Naive thymus-derived CD4-positive, alpha-beta T cell (primary cell): ENCODE measurements at regions of chr6 and their contacts with region 1.

Region 1: DNA sequence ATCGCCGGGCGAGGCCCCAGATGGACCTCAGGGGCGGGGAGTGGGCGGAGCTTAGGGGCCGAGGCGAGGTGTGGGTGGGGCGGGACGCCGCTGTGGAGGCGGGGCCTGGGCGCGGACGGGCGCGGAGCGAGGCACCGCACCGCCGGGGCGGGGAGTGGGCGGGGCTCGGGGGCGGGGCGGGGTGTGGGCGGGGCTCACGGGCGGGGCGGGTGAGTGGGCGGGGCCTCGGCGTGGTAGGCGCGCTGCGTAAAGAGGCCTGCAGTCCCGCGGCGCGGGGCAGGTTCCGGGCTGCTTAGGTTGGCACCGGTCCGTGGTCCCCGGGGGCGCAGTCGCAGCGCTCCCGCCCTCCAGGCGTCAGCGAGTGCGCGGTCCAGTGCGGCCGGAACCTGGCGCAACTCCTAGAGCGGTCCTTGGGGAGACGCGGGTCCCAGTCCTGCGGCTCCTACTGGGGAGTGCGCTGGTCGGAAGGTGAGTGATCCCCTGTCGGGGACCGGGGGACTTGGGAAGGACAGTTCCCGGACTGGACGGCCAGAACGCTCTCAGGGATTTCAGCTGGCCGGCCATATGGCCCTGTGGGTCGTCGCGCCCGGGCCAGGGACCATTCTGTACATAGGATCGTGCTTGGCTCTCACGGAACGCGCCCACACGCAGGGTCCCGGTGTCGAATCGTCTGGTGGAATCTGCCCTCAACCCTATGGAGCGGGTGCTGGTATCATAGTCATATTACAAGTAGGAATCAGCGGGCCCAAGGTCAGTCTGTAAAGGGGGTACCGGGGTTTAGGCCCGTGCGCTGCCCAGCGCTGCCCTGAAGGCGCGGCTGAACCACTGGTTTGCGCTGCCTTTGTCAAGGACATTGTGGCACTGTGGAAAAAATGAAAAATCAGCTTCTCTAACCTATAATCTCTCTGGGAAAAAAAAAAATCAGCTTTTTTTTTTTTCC is at the start of gene NQO2:
- DNase-seq: peak; percentile 68 to 92 (median 81)
- ATAC-seq: peak; percentile 91
- H3K4me3 ChIP-seq: peak within 1 kb of the TSS; percentile 95
- H3K4me3 Mint-ChIP-seq: peak within 1 kb of the TSS; percentile 83 to 95 (median 90)
- H3K27ac ChIP-seq: peak within 1 kb of the TSS; percentile 88
- H3K27ac Mint-ChIP-seq: peak within 1 kb of the TSS; percentile 78 to 96 (median 88)
- H3K4me1 ChIP-seq: peaks cover 5 to 18% of the 10 kb centered on the region in 2 donors
- H3K4me1 Mint-ChIP-seq: peaks cover 11 to 35% (median 26%) of the 10 kb centered on the region in 7 donors
- H3K27me3 ChIP-seq: no peaks in the 10 kb centered on the region
- H3K27me3 Mint-ChIP-seq: peaks cover 0 to 5% (median 0%) of the 10 kb centered on the region in 5 donors
- total RNA-seq, gene NQO2: 8.1 to 34.6 (median 22.6) TPM

Region 2: GRCh38 chr6:2706558-2706957 is 293.3 kb before region 1 on chr6:
- CTCF ChIA-PET with region 1: no interaction called
- POLR2A ChIA-PET with region 1: no interaction called
- intact Hi-C with region 1: no loop called
- DNase-seq: no peak
- ATAC-seq: no peak
- H3K4me3 ChIP-seq: no peak overlapping the region
- H3K4me3 Mint-ChIP-seq: no peak overlapping the region
- H3K27ac ChIP-seq: no peak overlapping the region
- H3K27ac Mint-ChIP-seq: no peak overlapping the region
- H3K4me1 ChIP-seq: no peaks in the 10 kb centered on the region
- H3K4me1 Mint-ChIP-seq: no peaks in the 10 kb centered on the region
- H3K27me3 ChIP-seq: no peaks in the 10 kb centered on the region
- H3K27me3 Mint-ChIP-seq: peaks cover 0 to 28% (median 12%) of the 10 kb centered on the region in 5 donors

Region 3: GRCh38 chr6:2738373-2738979 is 261.4 kb before region 1 on chr6:
- CTCF ChIA-PET with region 1: no interaction called
- POLR2A ChIA-PET with region 1: no interaction called
- intact Hi-C with region 1: loop called in 1 of 2 experiments (anchors 1 kb)
- DNase-seq: peak in 8 of 9 donors; percentile 27 to 59 (median 50)
- ATAC-seq: peak; percentile 72
- H3K4me3 ChIP-seq: no peak overlapping the region
- H3K4me3 Mint-ChIP-seq: no peak overlapping the region
- H3K27ac ChIP-seq: no peak overlapping the region
- H3K27ac Mint-ChIP-seq: no peak overlapping the region
- H3K4me1 ChIP-seq: no peaks in the 10 kb centered on the region
- H3K4me1 Mint-ChIP-seq: peaks cover 0 to 5% (median 0%) of the 10 kb centered on the region in 7 donors
- H3K27me3 ChIP-seq: no peaks in the 10 kb centered on the region
- H3K27me3 Mint-ChIP-seq: peaks cover 0 to 21% (median 0%) of the 10 kb centered on the region in 5 donors

Region 4: DNA sequence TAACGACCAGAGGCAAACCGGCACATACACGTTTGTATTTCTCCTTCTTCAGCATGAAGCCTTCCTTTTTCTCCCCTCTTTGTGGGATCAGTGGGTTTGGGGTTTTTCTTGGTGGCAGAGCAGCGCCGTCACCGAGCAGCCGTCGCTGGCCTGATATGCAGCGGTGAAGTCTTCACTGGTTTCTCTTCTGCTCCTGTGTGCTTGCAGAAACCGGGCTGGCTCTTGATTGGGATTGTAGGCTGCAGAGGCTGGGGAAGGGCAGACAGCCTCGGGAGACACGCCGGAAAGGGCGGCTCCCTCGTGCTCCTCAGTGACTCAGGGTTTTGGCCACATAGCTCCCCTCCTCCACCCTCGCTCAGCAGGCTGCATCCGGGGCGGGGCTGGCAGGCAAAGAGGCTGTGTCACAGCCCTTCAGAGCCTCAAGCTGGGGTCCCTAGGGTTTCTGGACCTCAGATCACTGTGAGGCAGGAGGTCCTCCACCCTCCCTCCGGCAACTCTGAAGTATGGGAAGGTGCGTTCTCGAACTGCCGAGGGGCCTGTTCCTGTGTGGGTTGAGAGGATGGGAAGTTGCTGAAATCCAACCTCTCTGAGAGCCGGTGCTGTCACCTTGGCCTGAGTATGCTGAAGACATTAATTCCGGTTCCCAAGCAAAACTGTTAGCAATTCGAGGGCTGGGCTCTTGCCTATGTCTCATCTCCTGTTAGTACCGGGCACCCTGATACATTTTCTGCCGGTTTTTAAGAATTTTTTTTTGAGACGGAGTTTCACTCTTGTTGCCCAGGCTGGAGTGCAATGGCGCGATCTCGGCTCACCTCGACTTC is 24.0 kb after region 1 on chr6:
- CTCF ChIA-PET with region 1: interaction called, 6 read pairs
- POLR2A ChIA-PET with region 1: interaction called, 53 read pairs
- intact Hi-C with region 1: loop called (anchors 1 kb)
- DNase-seq: peak; percentile 57 to 89 (median 72)
- ATAC-seq: peak; percentile 90
- H3K4me3 ChIP-seq: peak overlapping the region; percentile 69
- H3K4me3 Mint-ChIP-seq: peak overlapping the region; percentile 80 to 94 (median 88)
- H3K27ac ChIP-seq: peak overlapping the region; percentile 18
- H3K27ac Mint-ChIP-seq: peak overlapping the region in 8 of 9 donors; percentile 58 to 98 (median 82)
- H3K4me1 ChIP-seq: peaks cover 29 to 38% of the 10 kb centered on the region in 2 donors
- H3K4me1 Mint-ChIP-seq: peaks cover 23 to 56% (median 43%) of the 10 kb centered on the region in 7 donors
- H3K27me3 ChIP-seq: no peaks in the 10 kb centered on the region
- H3K27me3 Mint-ChIP-seq: peaks cover 0 to 1% (median 0%) of the 10 kb centered on the region in 5 donors

Region 5: DNA sequence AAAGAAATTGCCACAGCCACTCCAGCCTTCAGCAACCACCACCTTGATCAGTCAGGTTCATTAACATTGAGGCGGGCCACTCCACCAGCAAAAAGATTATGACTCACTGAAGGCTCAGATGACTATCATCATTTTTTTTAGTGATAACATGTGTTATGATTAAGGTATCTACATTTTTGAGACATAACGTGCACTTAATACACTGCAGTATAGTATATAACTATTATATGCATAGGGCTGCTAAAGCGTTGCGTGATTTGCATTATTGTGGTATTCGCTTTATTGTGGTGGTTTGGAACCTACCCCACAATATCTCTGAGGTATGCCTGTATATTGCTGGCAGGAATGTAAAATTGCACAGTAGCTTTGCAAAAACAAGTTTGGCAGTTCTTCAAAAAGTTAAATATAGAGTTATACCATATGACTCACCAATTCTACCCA is 61.6 kb after region 1 on chr6:
- CTCF ChIA-PET with region 1: interaction called, 17 read pairs
- POLR2A ChIA-PET with region 1: interaction called, 7 read pairs
- intact Hi-C with region 1: no loop called
- DNase-seq: no peak
- ATAC-seq: no peak
- H3K4me3 ChIP-seq: no peak overlapping the region
- H3K4me3 Mint-ChIP-seq: peak overlapping the region in 1 of 10 donors; percentile 19
- H3K27ac ChIP-seq: no peak overlapping the region
- H3K27ac Mint-ChIP-seq: no peak overlapping the region
- H3K4me1 ChIP-seq: no peaks in the 10 kb centered on the region
- H3K4me1 Mint-ChIP-seq: peaks cover 18 to 41% (median 34%) of the 10 kb centered on the region in 7 donors
- H3K27me3 ChIP-seq: no peaks in the 10 kb centered on the region
- H3K27me3 Mint-ChIP-seq: peaks cover 0 to 3% (median 0%) of the 10 kb centered on the region in 5 donors

Region 6: DNA sequence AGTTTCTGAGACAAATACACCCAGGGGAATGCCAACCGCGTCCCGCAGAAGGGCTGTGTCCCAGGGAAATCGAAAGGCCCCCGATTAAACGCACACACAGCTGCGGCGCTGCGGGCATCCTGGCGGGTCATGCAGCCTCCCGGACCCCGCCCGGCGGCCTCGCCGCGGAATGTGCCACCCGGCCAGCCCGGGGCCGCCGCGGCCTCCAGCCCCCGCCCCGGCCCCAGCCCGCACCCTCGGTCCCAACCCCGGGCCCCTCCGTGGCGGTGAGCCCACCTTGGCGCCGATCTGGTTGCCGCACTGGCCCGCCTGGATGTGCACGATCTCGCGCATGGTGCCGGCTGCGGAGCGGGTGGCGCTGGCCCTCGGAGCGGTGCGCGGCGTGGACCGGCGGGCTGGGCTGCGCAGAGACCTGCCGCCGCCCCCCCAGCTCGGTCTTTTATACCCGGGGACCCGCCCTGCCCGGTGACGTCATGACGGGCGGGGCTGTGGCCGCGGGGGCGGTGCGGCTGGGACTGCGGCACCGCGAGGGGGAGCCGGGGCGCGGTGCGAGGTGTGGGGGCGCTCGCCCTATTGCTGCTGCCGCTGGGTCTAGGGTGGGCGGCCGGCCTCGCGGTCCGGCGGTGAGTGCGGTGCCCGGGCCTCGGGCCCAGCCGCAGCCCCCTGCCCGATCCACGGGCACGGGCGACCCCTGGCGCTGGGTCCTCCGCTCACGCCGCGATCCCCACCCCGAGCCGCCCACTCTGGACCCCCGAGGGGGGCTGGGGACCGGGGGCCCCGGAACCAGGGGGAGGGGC is 157.4 kb after region 1 on chr6 and contains the start of gene TUBB2A:
- CTCF ChIA-PET with region 1: no interaction called
- POLR2A ChIA-PET with region 1: no interaction called
- intact Hi-C with region 1: loop called in 1 of 2 experiments (anchors 2 kb)
- DNase-seq: peak; percentile 83 to 96 (median 90)
- ATAC-seq: peak; percentile 87
- H3K4me3 ChIP-seq: peak within 1 kb of the TSS; percentile 61
- H3K4me3 Mint-ChIP-seq: peak within 1 kb of the TSS; percentile 81 to 94 (median 92)
- H3K27ac ChIP-seq: peak within 1 kb of the TSS; percentile 86
- H3K27ac Mint-ChIP-seq: peak within 1 kb of the TSS; percentile 75 to 96 (median 93)
- H3K4me1 ChIP-seq: peaks cover 15 to 17% of the 10 kb centered on the region in 2 donors
- H3K4me1 Mint-ChIP-seq: peaks cover 4 to 37% (median 33%) of the 10 kb centered on the region in 7 donors
- H3K27me3 ChIP-seq: no peaks in the 10 kb centered on the region
- H3K27me3 Mint-ChIP-seq: peaks cover 0 to 52% (median 4%) of the 10 kb centered on the region in 5 donors
- total RNA-seq, gene TUBB2A: 2.2 to 39.6 (median 3.1) TPM

Region 7: GRCh38 chr6:3258720-3259490 is 259.0 kb after region 1 on chr6 and contains the start of gene PSMG4:
- CTCF ChIA-PET with region 1: interaction called, 3 read pairs
- POLR2A ChIA-PET with region 1: no interaction called
- intact Hi-C with region 1: loop called in 1 of 2 experiments (anchors 1 kb)
- DNase-seq: peak; percentile 81 to 98 (median 89)
- ATAC-seq: peak; percentile 97
- H3K4me3 ChIP-seq: peak within 1 kb of the TSS; percentile 85
- H3K4me3 Mint-ChIP-seq: peak within 1 kb of the TSS; percentile 85 to 99 (median 97)
- H3K27ac ChIP-seq: peak within 1 kb of the TSS; percentile 80
- H3K27ac Mint-ChIP-seq: peak within 1 kb of the TSS; percentile 84 to 98 (median 92)
- H3K4me1 ChIP-seq: peaks cover 19 to 26% of the 10 kb centered on the region in 2 donors
- H3K4me1 Mint-ChIP-seq: peaks cover 28 to 45% (median 42%) of the 10 kb centered on the region in 7 donors
- H3K27me3 ChIP-seq: no peaks in the 10 kb centered on the region
- H3K27me3 Mint-ChIP-seq: peaks cover 0 to 25% (median 0%) of the 10 kb centered on the region in 5 donors
- total RNA-seq, gene PSMG4: 15.6 to 45.0 (median 27.7) TPM

Region 8: DNA sequence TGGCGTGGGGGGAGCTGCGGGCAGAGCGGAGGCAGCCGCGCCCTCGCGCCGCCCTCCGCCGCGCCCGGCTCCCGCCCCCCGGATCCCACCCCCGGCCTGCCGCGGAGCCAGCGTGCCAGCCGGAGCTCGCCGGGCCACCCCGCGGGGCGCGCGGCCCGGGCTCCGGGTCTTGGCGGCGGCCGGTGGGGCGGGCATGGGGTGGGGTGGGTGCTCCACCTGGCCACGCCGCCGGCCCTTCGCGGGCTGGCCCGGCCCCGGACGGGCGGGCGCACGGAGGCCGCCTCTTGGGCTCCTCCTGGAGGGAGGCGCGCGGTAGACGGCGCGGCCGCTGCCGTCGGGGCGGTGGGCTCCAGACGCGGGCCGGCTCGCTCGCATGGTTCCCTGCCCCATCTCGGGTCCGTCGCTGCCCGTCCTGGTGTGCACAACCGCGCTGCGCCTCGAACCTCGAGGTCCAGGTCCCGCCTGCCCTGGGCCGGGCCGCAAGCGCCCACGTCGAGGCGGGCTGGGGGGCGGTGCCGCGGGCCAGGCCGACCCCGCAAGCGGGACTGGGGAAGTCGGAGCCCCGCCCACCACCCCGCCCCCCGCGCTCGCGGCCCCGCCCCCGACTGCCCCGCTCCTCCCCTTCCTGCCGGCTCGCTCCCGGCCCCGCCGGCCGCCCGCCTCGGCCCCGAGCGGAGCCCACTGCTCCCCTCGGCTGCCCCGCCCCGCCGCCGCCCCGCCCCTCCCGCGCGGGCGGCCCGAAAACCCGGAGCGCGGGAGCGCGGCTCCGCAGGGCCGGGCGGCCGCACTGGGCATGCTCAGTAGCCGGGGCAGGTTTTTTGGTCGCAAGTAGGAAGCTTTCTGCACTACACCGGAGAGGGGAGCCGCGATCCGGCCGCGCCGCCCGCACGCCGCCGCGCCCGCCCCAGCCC is 1776.0 kb after region 1 on chr6 and contains the start of gene CDYL:
- CTCF ChIA-PET with region 1: no interaction called
- POLR2A ChIA-PET with region 1: no interaction called
- intact Hi-C with region 1: loop called in 1 of 2 experiments (anchors 10 kb)
- DNase-seq: peak; percentile 75 to 94 (median 88)
- ATAC-seq: peak; percentile 89
- H3K4me3 ChIP-seq: peak within 1 kb of the TSS; percentile 58
- H3K4me3 Mint-ChIP-seq: peak within 1 kb of the TSS; percentile 84 to 96 (median 93)
- H3K27ac ChIP-seq: peak within 1 kb of the TSS; percentile 63
- H3K27ac Mint-ChIP-seq: peak within 1 kb of the TSS; percentile 61 to 94 (median 87)
- H3K4me1 ChIP-seq: peaks cover 0 to 10% of the 10 kb centered on the region in 2 donors
- H3K4me1 Mint-ChIP-seq: peaks cover 32 to 48% (median 46%) of the 10 kb centered on the region in 7 donors
- H3K27me3 ChIP-seq: no peaks in the 10 kb centered on the region
- H3K27me3 Mint-ChIP-seq: peaks cover 0 to 38% (median 0%) of the 10 kb centered on the region in 5 donors
- total RNA-seq, gene CDYL: 25.5 to 43.3 (median 35.1) TPM